A549 (cell line): ENCODE measurements at regions of chr7 and their contacts with region 1.

Region 1: GRCh38 chr7:137626469-137627067 is 220.2 kb downstream of the DGKI start:
- DNase-seq: peak; percentile 27 to 35
- ATAC-seq: peak in 1 of 2 experiments; percentile 86; a peak in 3 of 6 replicates
- H3K4me3 ChIP-seq: no peak overlapping the region
- H3K27ac ChIP-seq: no peak overlapping the region
- H3K4me1 ChIP-seq: no peaks in the 10 kb centered on the region
- CTCF ChIP-seq: peak; percentile 48
- EP300 ChIP-seq: no peak
- POLR2A ChIP-seq: no peak
- RAD21 ChIP-seq: peak; percentile 23 to 37; a peak in 2 of 5 replicates

Region 2: DNA sequence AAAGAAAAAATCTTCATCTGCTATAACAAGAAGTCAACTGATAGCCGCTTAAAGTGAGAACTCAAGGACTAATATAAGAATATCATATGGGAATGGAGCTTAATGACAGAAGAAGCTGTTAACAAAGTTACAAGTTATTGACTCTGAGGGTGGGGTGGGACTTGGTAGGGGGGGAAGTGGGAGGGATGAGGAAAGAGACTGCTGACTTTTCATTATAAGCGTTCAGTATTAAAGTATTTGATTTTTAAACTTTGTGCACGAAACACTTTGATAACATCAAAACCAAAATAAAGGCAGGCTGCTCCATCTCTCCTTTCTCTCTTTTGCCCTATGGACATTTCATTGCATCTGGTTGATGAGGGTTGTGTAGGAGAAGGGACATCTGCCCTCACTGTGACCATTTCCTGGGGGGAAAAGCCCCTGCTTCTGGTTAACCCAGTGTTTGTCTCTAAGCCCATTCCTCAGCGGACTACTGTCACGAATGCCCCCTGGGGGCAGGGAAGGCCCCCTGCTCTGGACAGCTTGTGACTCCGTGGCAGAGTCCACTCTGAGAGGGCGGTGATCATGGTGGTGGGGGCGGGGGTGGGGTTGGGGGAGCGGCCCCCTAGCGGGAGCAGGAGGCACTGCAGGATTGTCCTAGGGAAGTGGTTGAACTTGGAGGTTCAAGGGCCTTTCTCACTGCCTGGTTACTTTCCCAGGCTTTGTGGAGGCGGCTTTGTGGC is 1916.0 kb before region 1 on chr7:
- CTCF ChIA-PET with region 1: no interaction called
- POLR2A ChIA-PET with region 1: no interaction called
- DNase-seq: peak; percentile 25 to 46
- ATAC-seq: peak in 1 of 2 experiments; percentile 51; a peak in 3 of 6 replicates
- H3K4me3 ChIP-seq: no peak overlapping the region
- H3K27ac ChIP-seq: no peak overlapping the region
- H3K4me1 ChIP-seq: peaks cover 14% of the 10 kb centered on the region
- CTCF ChIP-seq: peak; percentile 56
- EP300 ChIP-seq: no peak
- POLR2A ChIP-seq: no peak
- RAD21 ChIP-seq: no peak; a peak in 1 of 5 replicates

Region 3: DNA sequence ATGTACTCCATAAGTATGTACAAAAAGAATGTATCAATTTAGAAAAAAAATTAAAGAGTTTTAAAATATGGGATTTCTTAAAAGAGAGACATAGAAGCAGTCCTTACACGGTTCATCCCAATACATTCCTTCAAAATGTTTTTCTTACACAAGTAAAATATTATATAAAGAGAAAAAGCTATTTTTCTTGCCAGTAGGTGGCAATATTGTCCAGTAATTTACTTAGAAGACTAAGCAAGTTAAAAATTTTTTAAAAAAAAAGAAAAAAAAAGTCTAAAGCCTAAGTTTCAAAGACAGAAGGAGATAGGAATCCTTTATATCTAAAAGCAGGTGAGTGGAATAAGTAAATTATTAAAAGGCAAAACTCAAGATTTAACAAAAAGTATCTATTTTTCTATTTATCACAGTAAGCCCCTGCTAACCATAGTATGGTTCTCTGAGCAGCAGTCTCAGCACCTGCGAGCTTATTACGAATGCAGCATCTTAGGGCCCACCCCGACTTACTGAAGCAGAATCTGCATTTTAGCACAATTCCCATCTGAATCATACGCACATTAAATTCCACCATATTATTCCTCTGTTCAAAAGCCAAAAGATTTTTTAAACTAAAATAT is 20.4 kb before region 1 on chr7:
- CTCF ChIA-PET with region 1: interaction called, 10 read pairs
- POLR2A ChIA-PET with region 1: no interaction called
- DNase-seq: peak; percentile 14 to 52
- ATAC-seq: peak in 1 of 2 experiments; percentile 54; a peak in 2 of 6 replicates
- H3K4me3 ChIP-seq: no peak overlapping the region
- H3K27ac ChIP-seq: no peak overlapping the region
- H3K4me1 ChIP-seq: no peaks in the 10 kb centered on the region
- CTCF ChIP-seq: peak; percentile 53
- EP300 ChIP-seq: no peak
- POLR2A ChIP-seq: no peak
- RAD21 ChIP-seq: peak; percentile 45 to 70

Region 4: DNA sequence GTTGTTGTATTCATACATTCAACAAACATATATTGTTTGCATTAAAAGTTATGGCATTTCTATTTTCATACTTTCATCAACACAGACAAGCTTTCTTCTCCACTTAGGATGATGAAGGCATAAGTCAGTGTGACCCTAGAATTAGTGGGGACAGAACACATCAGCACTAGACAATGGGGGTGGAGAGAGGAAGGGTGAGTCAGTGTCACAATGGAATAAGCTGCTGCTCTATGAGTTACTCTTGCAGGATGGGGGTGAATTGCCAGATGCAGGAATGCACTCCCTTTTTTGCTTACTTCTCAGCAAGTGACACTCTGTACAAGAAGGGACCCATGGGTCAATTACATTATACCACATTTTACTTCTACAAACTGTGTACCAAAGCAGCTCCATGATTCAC is 146.2 kb after region 1 on chr7:
- CTCF ChIA-PET with region 1: no interaction called
- POLR2A ChIA-PET with region 1: no interaction called
- DNase-seq: no peak
- ATAC-seq: no peak
- H3K4me3 ChIP-seq: no peak overlapping the region
- H3K27ac ChIP-seq: no peak overlapping the region
- H3K4me1 ChIP-seq: no peaks in the 10 kb centered on the region
- CTCF ChIP-seq: no peak
- EP300 ChIP-seq: no peak
- POLR2A ChIP-seq: no peak
- RAD21 ChIP-seq: no peak

Region 5: GRCh38 chr7:137846827-137847567 is 220.4 kb after region 1 on chr7 and contains the start of gene DGKI:
- CTCF ChIA-PET with region 1: no interaction called
- POLR2A ChIA-PET with region 1: no interaction called
- DNase-seq: no peak
- ATAC-seq: peak; percentile 30 to 59; a peak in 3 of 6 replicates
- H3K4me3 ChIP-seq: peak within 1 kb of the TSS; percentile 51
- H3K27ac ChIP-seq: peak within 1 kb of the TSS in 1 of 2 experiments; percentile 66; a peak in 2 of 6 replicates
- H3K4me1 ChIP-seq: no peaks in the 10 kb centered on the region; the same call in 2 of the 3 replicates
- CTCF ChIP-seq: no peak
- EP300 ChIP-seq: no peak
- POLR2A ChIP-seq: no peak
- RAD21 ChIP-seq: no peak
- polyA plus RNA-seq, gene DGKI: 0.05 and 0.25 TPM in 2 replicates